Activated T-helper 1 cell treated with anti-CD3 and anti-CD28 coated beads, Interleukin-12 subunit alpha, Interleukin-12 subunit beta, Interleukin-2, Interleukin-4 antibody, amounts not matched to agents 30 ng/mL and 10 ng/mL and 1 ng/mL, durations not matched to agents 14 hours and 24 hours and 36 hours (primary cell): ENCODE measurements at regions of chr12 and their contacts with region 1.

Region 1: GRCh38 chr12:57520053-57520871 is at the start of gene DDIT3:
- DNase-seq: peak; percentile 99
- H3K4me3 Mint-ChIP-seq: peak within 1 kb of the TSS; percentile 97
- H3K27ac Mint-ChIP-seq: peak within 1 kb of the TSS; percentile 100
- H3K4me1 Mint-ChIP-seq: peaks cover 62% of the 10 kb centered on the region
- H3K27me3 Mint-ChIP-seq: no peaks in the 10 kb centered on the region
- total RNA-seq, gene DDIT3: 17.8 and 18.1 TPM in 2 replicates

Region 2: DNA sequence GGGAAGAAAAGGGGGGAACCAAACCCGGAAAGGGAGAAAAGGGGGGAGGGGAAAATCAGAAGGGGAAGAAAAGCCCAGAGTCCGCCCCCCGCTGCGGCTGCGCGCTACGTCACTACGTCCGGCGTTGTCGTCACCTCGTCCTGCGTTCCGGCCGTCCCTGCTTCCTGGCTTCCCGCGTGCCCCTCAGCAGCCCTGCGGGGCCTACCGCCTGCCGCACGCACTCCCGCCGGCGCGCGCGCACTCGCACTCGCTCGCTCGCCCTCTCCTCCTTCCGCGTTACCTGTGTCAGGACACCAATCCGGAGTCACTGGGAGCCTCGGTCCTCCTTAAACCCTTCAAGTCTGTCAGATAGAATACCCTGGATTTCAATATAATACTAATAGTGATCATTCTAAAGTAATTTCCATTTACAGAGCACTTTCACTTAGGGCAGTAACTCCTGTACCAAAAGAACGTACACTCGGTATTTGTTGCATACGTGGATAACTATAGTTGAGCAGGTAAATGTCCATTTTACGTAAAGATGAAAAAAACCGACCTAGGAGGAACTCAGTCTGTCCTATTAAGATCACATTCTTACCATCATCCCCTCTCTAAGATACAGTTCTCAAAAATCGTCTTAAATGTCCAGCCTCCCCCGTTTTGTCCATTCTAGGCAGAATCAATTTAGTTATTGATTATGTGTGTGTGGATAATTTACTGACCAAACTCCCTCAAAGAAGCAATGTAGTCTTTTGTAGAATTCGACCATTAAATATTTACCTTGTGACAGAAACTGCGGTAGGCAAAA is 89.1 kb before region 1 on chr12 and contains the start of gene R3HDM2:
- intact Hi-C with region 1: loop called (anchors 1 kb)
- DNase-seq: peak; percentile 90
- H3K4me3 Mint-ChIP-seq: peak within 1 kb of the TSS; percentile 98
- H3K27ac Mint-ChIP-seq: peak within 1 kb of the TSS; percentile 99
- H3K4me1 Mint-ChIP-seq: peaks cover 34% of the 10 kb centered on the region
- H3K27me3 Mint-ChIP-seq: no peaks in the 10 kb centered on the region
- total RNA-seq, gene R3HDM2: 39.0 and 44.6 TPM in 2 replicates

Region 3: DNA sequence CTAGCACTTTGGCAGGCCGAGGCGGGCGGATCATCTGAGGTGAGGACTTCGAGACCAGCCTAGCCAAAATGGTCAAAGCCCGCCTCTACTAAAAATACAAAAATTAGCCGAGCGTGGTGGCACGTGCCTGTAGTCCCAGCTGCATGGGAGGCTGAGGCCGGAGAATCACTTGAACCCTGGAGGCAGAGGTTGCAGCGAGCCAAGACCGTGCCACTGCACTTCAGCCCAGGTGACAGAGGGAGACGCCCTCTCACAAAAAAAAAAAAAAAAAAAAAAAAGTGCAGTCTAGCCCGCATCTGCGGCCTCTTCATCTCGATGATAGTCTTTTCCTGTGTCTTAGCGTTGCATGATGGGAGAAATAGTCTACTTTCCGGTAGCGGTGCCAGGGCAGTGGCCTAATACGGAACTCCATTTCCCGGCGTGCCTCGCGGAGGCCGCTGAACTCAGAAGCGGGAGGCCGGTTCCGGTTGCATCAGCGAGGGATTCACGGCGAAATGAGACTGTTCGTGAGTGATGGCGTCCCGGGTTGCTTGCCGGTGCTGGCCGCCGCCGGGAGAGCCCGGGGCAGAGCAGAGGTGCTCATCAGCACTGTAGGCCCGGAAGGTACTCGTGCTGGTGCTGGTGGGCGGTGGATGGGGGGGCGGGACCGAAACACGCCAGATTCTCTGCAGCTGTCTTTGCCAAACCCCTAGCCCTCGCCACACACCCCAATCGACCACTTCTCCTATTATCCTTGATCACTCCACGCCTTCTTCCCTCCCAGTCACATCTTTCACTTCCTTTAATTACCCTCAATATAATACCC is 32.5 kb before region 1 on chr12 and contains the start of gene MARS1:
- intact Hi-C with region 1: loop called (anchors 1 kb)
- DNase-seq: peak; percentile 91
- H3K4me3 Mint-ChIP-seq: peak within 1 kb of the TSS; percentile 97
- H3K27ac Mint-ChIP-seq: peak within 1 kb of the TSS; percentile 96
- H3K4me1 Mint-ChIP-seq: peaks cover 33% of the 10 kb centered on the region
- H3K27me3 Mint-ChIP-seq: no peaks in the 10 kb centered on the region
- total RNA-seq, gene MARS1: 283 and 318 TPM in 2 replicates

Region 4: DNA sequence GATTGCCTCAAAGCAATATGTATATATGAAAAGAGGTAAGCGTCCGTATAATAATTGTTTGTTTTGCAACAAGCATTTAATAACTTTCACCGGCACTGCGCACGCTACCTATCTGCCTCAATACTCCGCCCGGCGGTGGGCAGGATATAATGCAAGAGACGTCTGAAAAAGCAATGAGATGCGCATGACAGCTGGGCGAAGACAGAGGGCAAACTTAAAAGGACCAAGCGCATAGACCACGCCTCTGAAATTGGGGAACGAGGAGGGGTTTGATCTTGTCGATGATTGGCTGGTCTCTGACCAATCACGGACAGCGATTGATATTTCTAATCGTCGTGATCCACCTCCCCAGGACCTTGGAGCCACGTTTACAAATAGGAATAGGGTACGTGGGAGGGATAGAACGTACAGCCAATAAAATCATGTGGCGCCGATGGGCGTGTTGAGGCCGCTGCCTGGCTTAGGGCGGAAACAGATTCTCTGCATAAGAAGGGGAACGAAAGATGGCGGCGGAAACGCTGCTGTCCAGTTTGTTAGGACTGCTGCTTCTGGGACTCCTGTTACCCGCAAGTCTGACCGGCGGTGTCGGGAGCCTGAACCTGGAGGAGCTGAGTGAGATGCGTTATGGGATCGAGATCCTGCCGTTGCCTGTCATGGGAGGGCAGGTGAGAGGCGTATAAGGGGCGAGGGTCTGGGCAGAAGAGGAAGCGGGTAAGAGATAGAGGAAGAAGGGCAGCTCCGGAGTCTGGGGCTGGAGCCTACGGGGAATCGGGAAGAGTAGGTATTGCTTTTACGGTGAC is 173.6 kb after region 1 on chr12 and contains the start of gene OS9:
- intact Hi-C with region 1: loop called (anchors 1 kb)
- DNase-seq: peak; percentile 95
- H3K4me3 Mint-ChIP-seq: no peak within 1 kb of the TSS
- H3K27ac Mint-ChIP-seq: no peak within 1 kb of the TSS
- H3K4me1 Mint-ChIP-seq: no peaks in the 10 kb centered on the region
- H3K27me3 Mint-ChIP-seq: peaks cover 19% of the 10 kb centered on the region
- total RNA-seq, gene OS9: 99.6 and 100.0 TPM in 2 replicates

Region 5: DNA sequence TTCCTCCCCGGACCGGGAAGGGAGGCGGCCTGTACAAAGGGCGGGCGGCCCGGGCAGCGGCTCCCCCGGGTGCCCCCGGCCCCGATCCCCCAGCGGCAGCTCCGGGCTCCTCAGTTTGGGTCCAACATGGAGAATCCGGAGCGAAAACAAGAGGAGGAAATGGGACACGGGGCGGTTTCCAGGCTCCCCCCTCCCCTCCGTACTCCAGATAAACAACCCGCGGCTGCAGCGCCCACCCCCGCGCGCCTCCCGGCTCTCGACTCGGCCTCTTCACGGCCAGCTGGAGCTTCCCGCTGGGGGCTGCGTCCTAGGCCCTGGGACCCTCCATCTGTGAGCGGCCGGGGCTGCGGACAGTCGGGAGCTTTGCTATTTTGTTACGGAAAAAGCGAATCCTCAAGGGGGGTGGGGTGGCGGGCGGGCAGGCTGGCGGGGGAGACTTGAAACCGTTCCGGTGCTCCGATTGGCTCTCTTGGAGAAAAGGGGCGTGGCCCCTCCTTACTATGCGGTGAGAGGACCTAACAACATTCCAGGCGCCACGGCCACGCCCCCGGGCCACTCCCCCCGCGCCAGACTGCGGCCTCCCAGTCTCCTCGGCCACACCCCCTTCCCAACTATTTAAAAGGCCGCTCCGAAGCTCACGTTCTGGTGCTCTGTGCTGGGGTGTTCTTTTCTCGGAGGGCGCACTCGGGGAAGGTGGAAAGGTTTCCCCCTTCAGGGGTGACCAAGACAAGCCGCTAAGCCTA is 326.5 kb after region 1 on chr12 and contains the start of gene CTDSP2:
- intact Hi-C with region 1: loop called (anchors 5 kb)
- DNase-seq: peak; percentile 85
- H3K4me3 Mint-ChIP-seq: peak within 1 kb of the TSS; percentile 85
- H3K27ac Mint-ChIP-seq: peak within 1 kb of the TSS; percentile 68
- H3K4me1 Mint-ChIP-seq: peaks cover 43% of the 10 kb centered on the region
- H3K27me3 Mint-ChIP-seq: peaks cover 18% of the 10 kb centered on the region
- total RNA-seq, gene CTDSP2: 96.5 and 99.6 TPM in 2 replicates